Activated CD8-positive, alpha-beta T cell treated with anti-CD3 and anti-CD28 coated beads, Interleukin-2, amount 10 ng/mL, durations not matched to agents 7 days and 5 days (primary cell): ENCODE measurements at regions of chr18 and their contacts with region 1.

Region 1: DNA sequence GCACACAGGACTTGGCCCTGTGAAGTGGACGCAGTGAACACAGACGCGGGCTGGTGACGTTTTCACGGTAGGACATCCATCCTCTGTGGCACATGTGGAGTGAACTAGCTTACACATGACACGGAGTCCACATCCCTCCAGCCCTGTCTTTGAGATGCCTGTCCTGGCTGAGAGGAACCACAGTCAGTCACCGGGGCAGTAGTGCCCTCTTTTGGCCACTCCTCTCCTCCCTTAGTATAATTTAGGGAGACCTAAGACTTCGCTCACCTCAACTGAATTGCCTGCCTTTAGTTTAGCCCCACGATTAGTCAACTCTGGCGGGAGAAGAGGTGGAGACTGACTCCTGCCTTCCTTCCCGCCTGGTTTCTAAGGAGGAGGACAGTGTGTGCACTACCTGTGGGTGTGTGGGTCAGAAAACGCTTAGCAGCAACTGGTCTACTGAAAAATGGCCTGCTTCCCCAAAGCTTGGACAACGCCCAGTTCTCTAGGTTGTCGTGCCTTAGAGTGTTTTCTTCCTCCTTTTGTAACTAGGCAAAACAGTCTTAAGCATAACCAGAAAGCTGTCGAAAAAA is 70.6 kb downstream of the MBP start:
- DNase-seq: peak; percentile 58
- ATAC-seq: peak; percentile 45
- H3K4me3 Mint-ChIP-seq: peak overlapping the region; percentile 72
- H3K27ac Mint-ChIP-seq: peak overlapping the region; percentile 99
- H3K4me1 Mint-ChIP-seq: peaks cover 88% of the 10 kb centered on the region
- H3K27me3 Mint-ChIP-seq: no peaks in the 10 kb centered on the region

Region 2: DNA sequence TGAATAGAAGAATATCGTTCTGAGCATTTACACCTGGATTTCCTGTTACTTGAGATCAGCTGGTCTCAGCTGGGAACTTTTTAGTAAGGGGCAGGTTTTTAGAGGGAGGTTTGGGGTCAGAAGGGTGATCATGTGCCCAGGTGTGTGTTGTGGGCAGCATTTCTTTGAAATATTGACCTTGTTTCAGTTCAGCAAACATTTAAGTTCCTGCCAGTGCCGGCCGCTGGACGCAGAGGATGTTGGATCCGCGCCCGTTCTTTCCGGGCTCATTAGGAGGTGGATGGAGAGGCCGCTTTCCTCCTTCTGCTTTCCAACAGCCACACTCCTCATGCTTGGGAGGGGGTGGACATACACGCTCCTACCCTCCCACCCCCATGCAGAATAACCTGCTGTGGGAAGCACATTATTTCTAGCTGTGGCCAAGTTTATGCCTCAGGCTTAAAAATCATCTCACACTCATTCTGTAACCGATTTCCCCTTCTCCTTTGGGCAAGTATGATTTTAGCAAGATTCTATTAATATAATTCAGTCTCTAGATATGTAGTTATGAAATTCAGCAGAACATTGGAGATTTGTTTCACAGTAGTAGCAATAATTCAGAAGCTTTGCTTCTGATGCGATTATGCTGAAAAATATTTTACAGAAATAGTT is 108.3 kb before region 1 on chr18:
- CTCF ChIA-PET with region 1: no interaction called
- POLR2A ChIA-PET with region 1: no interaction called
- DNase-seq: no peak
- ATAC-seq: no peak
- H3K4me3 Mint-ChIP-seq: no peak overlapping the region
- H3K27ac Mint-ChIP-seq: no peak overlapping the region
- H3K4me1 Mint-ChIP-seq: peaks cover 20% of the 10 kb centered on the region
- H3K27me3 Mint-ChIP-seq: no peaks in the 10 kb centered on the region

Region 3: GRCh38 chr18:77044866-77045664 is 17.0 kb before region 1 on chr18:
- CTCF ChIA-PET with region 1: no interaction called
- POLR2A ChIA-PET with region 1: no interaction called
- DNase-seq: no peak
- ATAC-seq: no peak
- H3K4me3 Mint-ChIP-seq: no peak overlapping the region
- H3K27ac Mint-ChIP-seq: no peak overlapping the region
- H3K4me1 Mint-ChIP-seq: peaks cover 14% of the 10 kb centered on the region
- H3K27me3 Mint-ChIP-seq: no peaks in the 10 kb centered on the region

Region 4: DNA sequence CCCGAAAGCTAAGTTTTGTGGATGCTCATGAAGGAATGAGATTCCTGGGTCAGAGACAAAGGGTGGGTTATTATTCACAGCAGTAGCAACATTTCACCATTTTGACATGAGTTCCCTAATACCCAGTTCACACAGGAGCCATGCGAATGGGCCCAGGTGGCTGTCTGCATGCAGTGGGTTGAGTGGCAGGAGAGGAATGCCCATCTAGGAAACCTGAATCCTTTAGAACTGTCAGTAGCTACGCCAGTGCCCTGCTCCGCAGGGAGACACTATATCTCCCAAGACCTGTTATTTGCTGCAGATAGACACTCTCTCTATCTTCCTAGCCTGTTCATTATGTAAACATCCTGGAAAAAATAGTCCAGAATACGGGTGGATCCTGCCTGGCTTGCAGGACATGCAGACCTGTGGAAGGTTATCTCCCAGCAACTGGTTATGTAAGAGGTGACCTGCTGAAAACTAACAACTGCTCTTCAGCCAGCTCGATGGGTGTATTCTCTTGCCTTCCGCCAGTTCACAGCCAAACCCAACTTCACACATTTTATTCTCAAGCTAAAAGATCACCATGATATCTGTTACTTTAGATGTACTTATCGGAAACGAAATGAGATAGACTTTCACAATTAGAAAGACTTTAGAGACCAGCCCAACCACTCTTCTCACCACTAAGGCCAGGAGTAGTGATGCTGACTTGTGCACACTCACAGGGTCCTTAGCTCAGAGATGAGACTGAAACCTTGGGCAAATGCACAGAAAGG is 11.5 kb after region 1 on chr18:
- CTCF ChIA-PET with region 1: interaction called, 62 read pairs
- POLR2A ChIA-PET with region 1: interaction called, 13 read pairs
- DNase-seq: no peak
- ATAC-seq: peak; percentile 54
- H3K4me3 Mint-ChIP-seq: peak overlapping the region; percentile 1
- H3K27ac Mint-ChIP-seq: peak overlapping the region; percentile 66
- H3K4me1 Mint-ChIP-seq: peaks cover 89% of the 10 kb centered on the region
- H3K27me3 Mint-ChIP-seq: no peaks in the 10 kb centered on the region

Region 5: GRCh38 chr18:77101410-77102258 is 39.6 kb after region 1 on chr18:
- CTCF ChIA-PET with region 1: interaction called, 22 read pairs
- POLR2A ChIA-PET with region 1: interaction called, 103 read pairs
- DNase-seq: peak; percentile 48
- ATAC-seq: peak; percentile 56
- H3K4me3 Mint-ChIP-seq: peak overlapping the region; percentile 71
- H3K27ac Mint-ChIP-seq: peak overlapping the region; percentile 96
- H3K4me1 Mint-ChIP-seq: peaks cover 93% of the 10 kb centered on the region
- H3K27me3 Mint-ChIP-seq: no peaks in the 10 kb centered on the region

Region 6: GRCh38 chr18:77157312-77157711 is 95.3 kb after region 1 on chr18:
- CTCF ChIA-PET with region 1: no interaction called
- POLR2A ChIA-PET with region 1: no interaction called
- DNase-seq: no peak
- ATAC-seq: no peak
- H3K4me3 Mint-ChIP-seq: no peak overlapping the region
- H3K27ac Mint-ChIP-seq: no peak overlapping the region
- H3K4me1 Mint-ChIP-seq: no peaks in the 10 kb centered on the region
- H3K27me3 Mint-ChIP-seq: peaks cover 10% of the 10 kb centered on the region